CD4-positive, alpha-beta T cell (primary cell): ENCODE measurements at regions of chr3 and their contacts with region 1.

Region 1: GRCh38 chr3:141105828-141106628 is 54.9 kb downstream of the SPSB4 start:
- DNase-seq: peak; percentile 8 to 79 (median 38)
- ATAC-seq: peak; percentile 48
- H3K4me3 ChIP-seq: no peak overlapping the region
- H3K4me3 Mint-ChIP-seq: no peak overlapping the region
- H3K27ac ChIP-seq: no peak overlapping the region
- H3K27ac Mint-ChIP-seq: no peak overlapping the region
- H3K4me1 ChIP-seq: no peaks in the 10 kb centered on the region
- H3K4me1 Mint-ChIP-seq: no peaks in the 10 kb centered on the region
- H3K27me3 ChIP-seq: no peaks in the 10 kb centered on the region
- H3K27me3 Mint-ChIP-seq: no peaks in the 10 kb centered on the region
- CTCF ChIP-seq: peak; percentile 82

Region 2: GRCh38 chr3:139427283-139427993 is 1678.6 kb before region 1 on chr3:
- CTCF ChIA-PET with region 1: interaction called, 3 read pairs
- POLR2A ChIA-PET with region 1: no interaction called
- intact Hi-C with region 1: loop called in 1 of 2 experiments (anchors 5 kb)
- DNase-seq: peak in 3 of 14 experiments; percentile 53 to 62 (median 61)
- ATAC-seq: no peak
- H3K4me3 ChIP-seq: no peak overlapping the region
- H3K4me3 Mint-ChIP-seq: no peak overlapping the region
- H3K27ac ChIP-seq: no peak overlapping the region
- H3K27ac Mint-ChIP-seq: no peak overlapping the region
- H3K4me1 ChIP-seq: no peaks in the 10 kb centered on the region
- H3K4me1 Mint-ChIP-seq: no peaks in the 10 kb centered on the region
- H3K27me3 ChIP-seq: no peaks in the 10 kb centered on the region
- H3K27me3 Mint-ChIP-seq: no peaks in the 10 kb centered on the region
- CTCF ChIP-seq: peak; percentile 80

Region 3: GRCh38 chr3:140898340-140899180 is 207.5 kb before region 1 on chr3:
- CTCF ChIA-PET with region 1: no interaction called
- POLR2A ChIA-PET with region 1: no interaction called
- intact Hi-C with region 1: loop called (anchors 2 kb)
- DNase-seq: peak in 4 of 14 experiments; percentile 12 to 62 (median 55)
- ATAC-seq: peak; percentile 69
- H3K4me3 ChIP-seq: no peak overlapping the region
- H3K4me3 Mint-ChIP-seq: no peak overlapping the region
- H3K27ac ChIP-seq: no peak overlapping the region
- H3K27ac Mint-ChIP-seq: no peak overlapping the region
- H3K4me1 ChIP-seq: no peaks in the 10 kb centered on the region
- H3K4me1 Mint-ChIP-seq: no peaks in the 10 kb centered on the region
- H3K27me3 ChIP-seq: peaks cover 9 to 15% of the 10 kb centered on the region in 2 experiments
- H3K27me3 Mint-ChIP-seq: peaks cover 32% of the 10 kb centered on the region
- CTCF ChIP-seq: peak; percentile 67

Region 4: GRCh38 chr3:140922634-140923033 is 183.4 kb before region 1 on chr3:
- CTCF ChIA-PET with region 1: no interaction called
- POLR2A ChIA-PET with region 1: no interaction called
- intact Hi-C with region 1: loop called (anchors 1 to 2 kb)
- DNase-seq: peak in 3 of 14 experiments; percentile 21 to 39 (median 28)
- ATAC-seq: peak; percentile 68
- H3K4me3 ChIP-seq: no peak overlapping the region
- H3K4me3 Mint-ChIP-seq: no peak overlapping the region
- H3K27ac ChIP-seq: no peak overlapping the region
- H3K27ac Mint-ChIP-seq: no peak overlapping the region
- H3K4me1 ChIP-seq: no peaks in the 10 kb centered on the region
- H3K4me1 Mint-ChIP-seq: no peaks in the 10 kb centered on the region
- H3K27me3 ChIP-seq: peaks cover 0 to 6% of the 10 kb centered on the region in 2 experiments
- H3K27me3 Mint-ChIP-seq: peaks cover 22% of the 10 kb centered on the region
- CTCF ChIP-seq: peak; percentile 43

Region 5: DNA sequence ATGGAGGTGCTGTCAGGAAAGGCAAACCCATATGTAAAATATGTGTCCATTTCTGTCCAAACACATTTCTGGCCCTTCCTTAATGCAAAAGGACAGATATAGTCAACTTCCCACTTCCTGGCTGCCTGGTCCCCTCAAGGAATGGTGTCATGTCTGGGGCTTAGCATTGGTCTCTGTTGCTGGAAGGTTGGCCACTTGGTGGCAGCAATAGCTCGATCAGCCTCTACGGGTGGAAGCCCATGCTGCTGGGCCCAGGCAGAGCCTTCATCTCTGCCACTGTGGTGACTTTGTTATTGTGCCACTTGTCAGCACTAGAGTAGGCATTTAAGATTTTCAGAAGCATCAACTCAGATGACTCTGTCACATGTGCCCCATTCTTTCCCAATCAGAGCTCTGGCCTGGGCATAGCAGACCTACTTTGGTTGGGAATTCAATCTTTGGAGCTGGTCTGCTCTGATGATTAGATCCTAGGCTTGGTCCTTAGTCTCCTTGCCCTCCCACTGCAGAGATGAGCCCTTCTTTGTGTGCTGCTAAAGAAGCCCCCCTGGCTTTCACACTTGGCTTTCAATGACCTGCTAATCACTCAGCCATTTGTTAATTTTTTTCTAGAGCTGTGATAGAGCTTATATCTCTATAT is 105.9 kb before region 1 on chr3:
- CTCF ChIA-PET with region 1: no interaction called
- POLR2A ChIA-PET with region 1: interaction called, 3 read pairs
- intact Hi-C with region 1: loop called (anchors 2 kb)
- DNase-seq: peak; percentile 8 to 70 (median 36)
- ATAC-seq: peak; percentile 86
- H3K4me3 ChIP-seq: no peak overlapping the region
- H3K4me3 Mint-ChIP-seq: no peak overlapping the region
- H3K27ac ChIP-seq: no peak overlapping the region
- H3K27ac Mint-ChIP-seq: no peak overlapping the region
- H3K4me1 ChIP-seq: no peaks in the 10 kb centered on the region
- H3K4me1 Mint-ChIP-seq: no peaks in the 10 kb centered on the region
- H3K27me3 ChIP-seq: no peaks in the 10 kb centered on the region
- H3K27me3 Mint-ChIP-seq: no peaks in the 10 kb centered on the region
- CTCF ChIP-seq: peak; percentile 50

Region 6: DNA sequence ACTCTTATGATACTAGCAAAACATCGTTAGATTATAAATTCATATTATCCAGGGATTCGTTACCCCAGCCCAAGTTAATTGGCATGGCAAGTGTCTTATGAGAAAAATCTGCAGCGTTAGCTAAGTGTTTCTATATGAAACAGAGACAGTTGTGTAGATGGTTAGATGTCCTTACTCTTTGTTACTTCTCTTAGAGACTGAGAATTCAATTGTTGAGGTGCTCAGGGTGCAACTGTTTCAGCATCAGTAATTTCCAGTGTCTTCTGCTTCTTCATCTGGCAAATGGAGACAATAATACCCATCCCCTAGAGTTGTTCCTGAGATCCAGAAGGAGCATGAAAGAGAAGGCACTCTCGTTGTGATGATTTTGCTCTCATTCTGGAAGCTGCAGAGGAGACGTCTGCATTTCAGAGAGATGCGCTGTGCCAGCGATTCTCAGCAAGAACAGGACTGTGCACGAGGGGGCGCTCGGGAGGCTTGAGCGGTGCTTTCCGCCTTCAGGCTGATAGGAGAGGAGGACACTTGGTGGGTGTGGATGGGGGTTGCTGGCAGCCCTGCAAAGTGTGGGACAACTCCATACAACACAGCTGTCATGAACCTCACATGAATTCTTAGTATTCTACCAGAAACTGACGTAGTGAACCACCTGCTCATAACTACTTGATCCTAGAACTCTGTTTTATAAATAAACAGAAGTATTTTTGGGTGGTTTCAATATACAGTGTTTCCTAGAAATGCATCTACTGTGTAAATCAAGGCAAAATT is 94.6 kb before region 1 on chr3:
- CTCF ChIA-PET with region 1: no interaction called
- POLR2A ChIA-PET with region 1: no interaction called
- intact Hi-C with region 1: loop called in 1 of 2 experiments (anchors 5 kb)
- DNase-seq: peak; percentile 54 to 80 (median 66)
- ATAC-seq: peak; percentile 96
- H3K4me3 ChIP-seq: no peak overlapping the region
- H3K4me3 Mint-ChIP-seq: no peak overlapping the region
- H3K27ac ChIP-seq: no peak overlapping the region
- H3K27ac Mint-ChIP-seq: no peak overlapping the region
- H3K4me1 ChIP-seq: no peaks in the 10 kb centered on the region
- H3K4me1 Mint-ChIP-seq: peaks cover 6% of the 10 kb centered on the region
- H3K27me3 ChIP-seq: peaks cover 0 to 3% of the 10 kb centered on the region in 2 experiments
- H3K27me3 Mint-ChIP-seq: peaks cover 54% of the 10 kb centered on the region
- CTCF ChIP-seq: peak; percentile 63